CD4-positive, alpha-beta T cell (primary cell): ENCODE measurements at regions of chr12 and their contacts with region 1.

Region 1: DNA sequence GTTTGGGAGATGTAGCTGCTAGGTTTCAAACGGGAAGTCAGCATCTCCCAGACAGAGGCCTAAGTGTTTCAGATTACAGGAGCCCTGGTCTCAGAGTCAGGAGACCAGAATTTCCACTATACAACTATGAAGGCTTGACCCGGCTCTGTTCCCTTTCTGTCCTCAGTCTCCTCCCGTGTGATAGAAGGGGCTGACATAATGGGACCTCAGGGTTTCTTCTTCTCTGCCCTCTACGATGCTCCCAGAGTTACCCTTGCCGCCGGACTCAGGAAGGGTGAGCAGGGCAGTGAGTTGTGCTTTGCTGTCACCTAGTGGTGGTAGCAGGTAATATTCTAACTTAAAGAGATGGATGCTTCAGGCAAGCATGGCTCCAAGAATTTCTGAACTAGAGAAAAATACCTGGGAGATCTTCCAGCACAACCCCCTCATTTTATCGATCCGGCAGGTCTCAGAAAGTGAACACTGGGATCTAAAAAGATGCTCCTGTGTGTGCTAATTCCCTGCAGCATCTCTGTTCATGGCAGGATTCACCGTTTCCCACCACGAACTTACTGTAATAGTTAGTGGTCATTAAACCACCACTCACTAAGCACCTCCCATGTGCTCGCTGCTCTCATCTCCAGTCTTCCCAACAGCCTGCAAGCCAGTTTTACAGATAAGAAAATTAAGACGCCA is 84.4 kb downstream of the VWF start:
- DNase-seq: peak in 12 of 14 experiments; percentile 11 to 78 (median 32)
- ATAC-seq: peak; percentile 84
- H3K4me3 ChIP-seq: no peak overlapping the region
- H3K4me3 Mint-ChIP-seq: no peak overlapping the region
- H3K27ac ChIP-seq: no peak overlapping the region
- H3K27ac Mint-ChIP-seq: no peak overlapping the region
- H3K4me1 ChIP-seq: peaks cover 5% of the 10 kb centered on the region
- H3K4me1 Mint-ChIP-seq: no peaks in the 10 kb centered on the region
- H3K27me3 ChIP-seq: peaks cover 0 to 2% of the 10 kb centered on the region in 2 experiments
- H3K27me3 Mint-ChIP-seq: no peaks in the 10 kb centered on the region
- CTCF ChIP-seq: peak; percentile 88

Region 2: DNA sequence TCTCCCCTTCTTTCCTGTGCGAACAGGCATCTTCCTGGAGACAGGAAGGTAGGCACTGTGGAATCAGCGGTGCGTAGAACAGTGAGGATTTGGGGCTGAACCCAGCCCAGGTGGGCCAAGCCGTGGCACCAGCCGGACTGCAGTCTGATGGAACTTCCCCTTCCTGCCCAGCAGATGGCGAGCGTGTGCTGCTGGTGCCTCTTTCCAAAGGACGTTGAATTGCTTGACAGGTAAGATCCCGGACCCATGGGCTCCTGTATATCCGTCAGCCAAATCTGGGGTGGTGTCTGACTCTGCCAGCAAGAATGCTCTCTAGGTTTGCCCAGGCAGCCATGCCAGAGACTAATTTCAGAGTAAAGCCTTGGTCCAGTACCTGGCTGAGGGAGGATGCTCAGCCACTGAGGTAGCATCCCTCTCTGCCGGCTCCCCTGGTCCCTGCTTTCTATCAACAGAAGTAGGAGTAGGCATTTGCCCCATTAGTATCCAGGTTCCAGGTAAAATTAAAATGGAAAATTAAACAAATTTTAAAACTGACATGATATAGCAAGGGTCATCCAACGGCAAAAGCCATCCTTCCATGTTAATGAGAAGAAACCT is 1017.5 kb before region 1 on chr12:
- CTCF ChIA-PET with region 1: no interaction called
- POLR2A ChIA-PET with region 1: no interaction called
- intact Hi-C with region 1: loop called in 1 of 2 experiments (anchors 5 kb)
- DNase-seq: peak in 10 of 14 experiments; percentile 5 to 64 (median 11)
- ATAC-seq: no peak
- H3K4me3 ChIP-seq: no peak overlapping the region
- H3K4me3 Mint-ChIP-seq: no peak overlapping the region
- H3K27ac ChIP-seq: no peak overlapping the region
- H3K27ac Mint-ChIP-seq: no peak overlapping the region
- H3K4me1 ChIP-seq: no peaks in the 10 kb centered on the region
- H3K4me1 Mint-ChIP-seq: no peaks in the 10 kb centered on the region
- H3K27me3 ChIP-seq: peaks cover 3 to 4% of the 10 kb centered on the region in 2 experiments
- H3K27me3 Mint-ChIP-seq: peaks cover 46% of the 10 kb centered on the region
- CTCF ChIP-seq: peak; percentile 90

Region 3: DNA sequence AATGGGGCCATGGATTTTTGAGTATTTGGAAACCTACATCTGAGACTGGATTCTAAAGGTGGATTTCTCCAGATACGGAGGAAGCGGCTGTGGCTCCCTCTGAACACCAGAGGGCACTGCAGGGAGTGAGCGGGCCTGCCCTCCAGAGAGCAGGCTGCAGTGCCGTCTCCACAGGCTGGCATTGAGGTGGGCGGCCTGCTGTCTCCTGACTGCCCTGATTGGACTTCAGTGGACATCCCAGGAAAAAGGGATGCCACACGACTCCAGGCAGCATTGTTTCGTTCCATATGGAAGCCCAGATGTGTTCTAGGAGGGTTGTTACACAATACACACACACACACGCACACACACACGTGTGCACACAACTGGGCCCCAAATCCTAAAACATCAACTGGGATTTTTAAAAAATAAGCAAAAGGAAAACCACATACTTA is 74.1 kb before region 1 on chr12:
- CTCF ChIA-PET with region 1: no interaction called
- POLR2A ChIA-PET with region 1: no interaction called
- intact Hi-C with region 1: loop called (anchors 1 to 5 kb)
- DNase-seq: peak; percentile 7 to 58 (median 30)
- ATAC-seq: peak; percentile 76
- H3K4me3 ChIP-seq: no peak overlapping the region
- H3K4me3 Mint-ChIP-seq: no peak overlapping the region
- H3K27ac ChIP-seq: no peak overlapping the region
- H3K27ac Mint-ChIP-seq: no peak overlapping the region
- H3K4me1 ChIP-seq: no peaks in the 10 kb centered on the region
- H3K4me1 Mint-ChIP-seq: no peaks in the 10 kb centered on the region
- H3K27me3 ChIP-seq: peaks cover 0 to 14% of the 10 kb centered on the region in 2 experiments
- H3K27me3 Mint-ChIP-seq: no peaks in the 10 kb centered on the region
- CTCF ChIP-seq: peak; percentile 67

Region 4: DNA sequence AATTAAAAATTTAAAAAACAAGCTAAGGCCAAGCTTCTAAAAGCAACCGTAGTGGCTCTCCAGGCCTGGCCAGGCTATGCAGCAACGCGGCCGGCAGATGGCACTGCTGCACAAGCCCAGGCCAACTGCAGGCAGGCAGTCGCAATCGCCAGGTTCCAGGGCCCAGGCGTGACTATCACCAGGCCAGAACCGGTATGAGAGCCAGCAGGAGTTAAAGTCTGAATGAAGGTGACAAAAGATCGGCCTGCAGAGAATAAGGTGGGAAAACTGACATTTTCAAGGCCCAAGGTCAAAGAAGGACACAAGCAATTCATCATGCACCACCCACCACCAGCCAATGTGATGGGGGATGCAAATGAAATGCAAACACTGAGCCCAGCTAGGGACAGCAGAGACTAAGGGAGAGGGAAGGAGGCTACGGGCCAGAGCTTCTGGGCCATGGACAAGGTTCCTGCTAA is 51.3 kb before region 1 on chr12:
- CTCF ChIA-PET with region 1: interaction called, 13 read pairs
- POLR2A ChIA-PET with region 1: no interaction called
- intact Hi-C with region 1: loop called (anchors 1 kb)
- DNase-seq: peak; percentile 52 to 83 (median 63)
- ATAC-seq: peak; percentile 86
- H3K4me3 ChIP-seq: no peak overlapping the region
- H3K4me3 Mint-ChIP-seq: no peak overlapping the region
- H3K27ac ChIP-seq: no peak overlapping the region
- H3K27ac Mint-ChIP-seq: no peak overlapping the region
- H3K4me1 ChIP-seq: peaks cover 4% of the 10 kb centered on the region
- H3K4me1 Mint-ChIP-seq: no peaks in the 10 kb centered on the region
- H3K27me3 ChIP-seq: no peaks in the 10 kb centered on the region
- H3K27me3 Mint-ChIP-seq: no peaks in the 10 kb centered on the region
- CTCF ChIP-seq: peak; percentile 98